ENCODE measurements at regions of chr3 and their contacts with region 1.

Region 1: GRCh38 chr3:160225176-160226025 is at the start of gene C3orf80:
- DNase-seq: peak; percentile 35
- H3K4me3 ChIP-seq: peak within 1 kb of the TSS; percentile 37 to 60 (median 47)
- H3K27ac ChIP-seq: no peak within 1 kb of the TSS
- H3K4me1 ChIP-seq: peaks cover 19% of the 10 kb centered on the region
- H3K27me3 ChIP-seq: peaks cover 43% of the 10 kb centered on the region
- CTCF ChIP-seq: no peak
- total RNA-seq, gene C3orf80: not detected

Region 2: DNA sequence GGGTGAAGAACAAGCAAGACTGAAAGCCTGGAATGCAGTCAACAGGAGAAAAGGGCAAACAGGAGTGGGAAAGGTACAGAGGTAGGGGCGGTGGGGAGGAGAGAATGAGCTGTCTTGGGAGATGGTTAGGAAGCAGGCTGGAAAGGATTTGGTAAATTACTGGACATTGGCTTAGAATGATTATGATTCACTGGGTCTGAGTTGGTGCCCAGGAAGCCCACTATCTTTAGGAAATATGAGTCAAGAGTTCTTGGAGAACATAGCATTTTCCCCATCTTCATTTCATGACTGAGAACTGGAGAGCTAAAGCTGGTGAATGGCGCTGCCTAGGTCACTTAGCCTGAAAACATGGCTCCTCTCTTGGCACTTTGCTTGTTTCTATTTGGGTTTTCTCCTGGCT is 74.9 kb before region 1 on chr3:
- CTCF ChIA-PET with region 1: no interaction called
- dilution Hi-C with region 1: no loop called
- in situ Hi-C with region 1: no loop called
- intact Hi-C with region 1: no loop called
- DNase-seq: no peak
- H3K4me3 ChIP-seq: no peak overlapping the region
- H3K27ac ChIP-seq: no peak overlapping the region
- H3K4me1 ChIP-seq: no peaks in the 10 kb centered on the region
- H3K27me3 ChIP-seq: no peaks in the 10 kb centered on the region
- CTCF ChIP-seq: no peak

Region 3: DNA sequence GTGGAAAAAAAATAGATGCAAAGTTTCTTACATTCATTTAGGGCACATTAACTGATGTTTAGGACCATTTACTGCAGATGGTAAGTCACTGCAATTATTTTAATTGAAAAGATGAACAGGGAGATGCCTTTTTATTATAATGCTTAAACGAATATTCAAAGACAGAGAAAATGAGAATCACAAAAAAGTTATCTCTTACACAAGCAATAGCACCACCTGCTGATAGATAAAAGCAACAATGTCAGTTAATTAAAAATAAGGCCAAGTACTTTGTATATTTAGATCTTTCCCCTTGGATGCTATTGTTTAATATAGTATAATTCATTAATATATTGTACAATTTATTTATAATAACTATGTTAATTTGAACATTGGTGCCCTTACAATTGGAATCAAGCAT is 117.7 kb after region 1 on chr3:
- CTCF ChIA-PET with region 1: no interaction called
- dilution Hi-C with region 1: no loop called
- in situ Hi-C with region 1: no loop called
- intact Hi-C with region 1: loop called (anchors 1 kb)
- DNase-seq: peak; percentile 4
- H3K4me3 ChIP-seq: no peak overlapping the region
- H3K27ac ChIP-seq: no peak overlapping the region
- H3K4me1 ChIP-seq: no peaks in the 10 kb centered on the region
- H3K27me3 ChIP-seq: no peaks in the 10 kb centered on the region
- CTCF ChIP-seq: peak; percentile 41 to 51